Mucosa of descending colon (tissue), 3 donors: ENCODE measurements at regions of chr17 and their contacts with region 1.

Region 1: DNA sequence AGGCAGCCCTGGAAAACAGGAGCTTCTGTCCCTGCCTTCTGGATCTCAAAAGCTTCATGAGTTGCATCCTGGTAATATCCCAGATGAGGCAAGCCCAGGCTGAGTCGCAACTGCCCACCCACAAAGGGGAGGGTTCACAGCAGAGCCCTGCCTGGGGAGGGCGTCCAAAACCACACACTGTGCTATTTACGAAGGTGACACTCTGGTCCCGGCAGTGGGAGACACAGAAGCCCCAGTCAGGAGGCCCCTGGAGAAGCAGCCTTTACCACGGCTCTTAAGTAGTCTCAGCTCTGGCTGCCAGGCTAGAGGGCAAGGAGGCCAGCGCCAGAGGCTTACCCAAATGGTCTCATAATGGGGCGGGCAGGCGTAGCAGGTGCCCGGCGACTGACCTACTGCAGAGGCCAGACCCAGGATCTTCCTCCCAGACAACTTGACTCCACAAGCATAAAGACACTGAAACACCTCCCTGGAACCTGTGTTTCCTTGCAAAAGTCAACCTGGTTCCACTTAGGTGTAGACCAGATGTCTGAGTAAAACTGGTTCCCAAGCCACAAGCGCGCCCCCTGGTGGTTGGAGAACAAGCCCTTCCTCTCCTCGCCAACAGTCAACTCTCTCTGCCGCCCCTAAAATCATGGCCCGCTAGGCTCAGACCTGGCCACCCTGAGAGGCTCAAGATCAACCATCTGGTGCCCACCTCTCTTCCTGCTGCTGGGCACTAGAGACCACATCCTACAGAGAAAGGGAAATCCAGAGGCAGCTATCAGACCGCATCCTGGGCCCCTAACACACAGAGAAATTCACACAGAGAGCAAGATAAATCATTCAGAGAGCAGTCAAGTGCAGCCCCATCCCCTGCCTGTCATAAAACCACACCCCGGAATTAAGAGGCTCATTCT is 5.2 kb downstream of the AXIN2 start:
- DNase-seq: peak; percentile 91 to 97 (median 95)
- ATAC-seq: peak; percentile 64
- H3K4me3 ChIP-seq: no peak overlapping the region
- H3K4me1 ChIP-seq: peaks cover 46% of the 10 kb centered on the region
- CTCF ChIP-seq: peak; percentile 72

Region 2: GRCh38 chr17:65294179-65294720 is 262.0 kb before region 1 on chr17:
- intact Hi-C with region 1: loop called in 1 of 2 experiments (anchors 2 kb)
- DNase-seq: peak; percentile 63 to 84 (median 80)
- ATAC-seq: peak; percentile 77
- H3K4me3 ChIP-seq: no peak overlapping the region
- H3K4me1 ChIP-seq: peaks cover 19% of the 10 kb centered on the region
- CTCF ChIP-seq: peak; percentile 70

Region 3: GRCh38 chr17:65455972-65456343 is 100.3 kb before region 1 on chr17:
- intact Hi-C with region 1: loop called in 1 of 2 experiments (anchors 10 kb)
- DNase-seq: peak in 1 of 3 donors; percentile 53
- ATAC-seq: peak; percentile 45
- H3K4me3 ChIP-seq: no peak overlapping the region
- H3K4me1 ChIP-seq: peaks cover 8% of the 10 kb centered on the region
- CTCF ChIP-seq: no peak

Region 4: GRCh38 chr17:65756760-65757159 is 200.5 kb after region 1 on chr17:
- intact Hi-C with region 1: no loop called
- DNase-seq: no peak
- ATAC-seq: no peak
- H3K4me3 ChIP-seq: no peak overlapping the region
- H3K4me1 ChIP-seq: no peaks in the 10 kb centered on the region
- CTCF ChIP-seq: no peak